CD4-positive, alpha-beta T cell (primary cell): ENCODE measurements at regions of chr15 and their contacts with region 1.

Region 1: DNA sequence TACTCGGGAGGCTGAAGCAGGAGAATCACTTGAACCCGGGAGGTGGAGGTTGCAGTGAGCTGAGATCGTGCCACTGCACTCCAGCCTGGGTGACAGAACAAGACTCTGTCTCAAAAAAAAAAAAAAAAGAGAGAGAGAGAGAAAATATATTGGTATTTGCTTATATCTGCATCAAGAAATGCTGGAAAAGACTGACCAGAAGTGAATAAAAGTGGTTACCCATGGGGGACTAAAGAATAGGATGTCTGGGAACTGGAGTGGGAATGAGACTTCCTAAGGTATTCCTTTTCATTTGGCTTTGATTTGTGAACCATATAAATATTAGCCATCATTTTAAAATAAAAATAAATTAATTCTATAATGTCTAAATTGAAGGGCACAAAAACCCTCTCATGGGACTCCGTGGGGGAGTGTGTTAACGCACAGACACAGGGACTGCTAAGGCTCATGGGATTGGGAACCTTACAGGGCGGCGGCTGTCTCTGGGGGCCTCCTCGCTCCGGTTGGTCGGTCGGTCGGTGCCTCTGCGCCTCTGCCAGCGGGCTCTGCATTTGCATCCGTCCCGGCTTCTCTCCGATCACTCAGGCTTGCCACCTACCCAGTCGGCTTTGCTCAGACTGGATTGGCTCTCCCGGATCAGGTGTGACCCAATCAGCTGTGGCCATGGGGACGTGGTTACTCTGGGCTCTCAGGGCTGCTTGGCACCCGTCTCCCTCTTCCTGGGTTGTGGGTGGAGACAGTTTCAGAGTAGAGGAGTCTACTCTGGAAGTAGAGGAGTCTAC is 12.7 kb upstream of the TSPAN3 start:
- DNase-seq: peak; percentile 24 to 85 (median 42)
- ATAC-seq: peak; percentile 96
- H3K4me3 ChIP-seq: peak overlapping the region; percentile 30
- H3K4me3 Mint-ChIP-seq: peak overlapping the region; percentile 30
- H3K27ac ChIP-seq: no peak overlapping the region
- H3K27ac Mint-ChIP-seq: no peak overlapping the region
- H3K4me1 ChIP-seq: peaks cover 15% of the 10 kb centered on the region
- H3K4me1 Mint-ChIP-seq: peaks cover 14% of the 10 kb centered on the region
- H3K27me3 ChIP-seq: no peaks in the 10 kb centered on the region
- H3K27me3 Mint-ChIP-seq: no peaks in the 10 kb centered on the region
- CTCF ChIP-seq: no peak

Region 2: DNA sequence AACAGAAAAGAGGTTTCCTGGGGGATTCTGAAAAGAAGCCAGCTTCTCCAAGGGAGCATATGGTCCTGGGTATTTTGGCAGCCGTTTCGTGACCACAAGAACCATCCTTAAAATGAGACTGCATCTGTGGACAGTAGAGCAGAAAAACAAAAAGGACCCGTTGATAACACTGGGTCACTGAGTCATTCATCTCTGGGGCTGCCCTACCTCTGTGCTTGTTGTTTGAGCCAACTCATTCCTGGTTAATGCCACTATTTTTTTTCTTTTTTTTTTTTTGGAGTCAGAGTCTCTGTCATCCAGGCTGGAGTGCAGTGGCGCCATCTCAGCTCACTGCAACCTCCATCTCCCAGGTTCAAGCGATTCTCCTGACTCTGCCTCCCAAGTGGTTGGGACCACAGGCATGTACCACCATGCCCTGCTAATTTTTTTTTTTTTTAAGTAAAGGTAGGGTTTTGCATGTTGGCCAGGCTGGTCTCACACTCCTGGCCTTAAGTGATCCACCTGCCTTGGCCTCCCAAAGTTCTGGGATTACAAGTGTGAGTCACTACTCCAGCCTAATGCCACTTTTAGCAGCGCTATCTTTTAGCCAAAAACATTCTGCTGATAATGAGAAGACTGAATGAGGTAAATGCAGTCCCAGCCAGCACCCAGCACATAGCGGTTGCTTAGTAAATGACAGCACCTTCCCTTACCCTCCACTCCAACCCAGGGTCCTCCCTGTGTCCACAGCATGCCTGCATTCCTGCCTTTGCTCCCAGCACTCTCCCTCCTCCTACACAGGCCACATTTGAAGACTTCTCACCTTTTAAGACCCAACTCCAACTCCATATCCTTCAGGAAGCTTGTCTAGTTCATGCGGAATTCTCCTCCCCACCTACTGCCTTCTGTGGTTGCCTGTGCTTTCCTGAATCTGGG is 756.1 kb before region 1 on chr15:
- CTCF ChIA-PET with region 1: no interaction called
- POLR2A ChIA-PET with region 1: no interaction called
- intact Hi-C with region 1: loop called in 1 of 2 experiments (anchors 10 kb)
- DNase-seq: no peak
- ATAC-seq: no peak
- H3K4me3 ChIP-seq: no peak overlapping the region
- H3K4me3 Mint-ChIP-seq: no peak overlapping the region
- H3K27ac ChIP-seq: no peak overlapping the region
- H3K27ac Mint-ChIP-seq: no peak overlapping the region
- H3K4me1 ChIP-seq: no peaks in the 10 kb centered on the region
- H3K4me1 Mint-ChIP-seq: no peaks in the 10 kb centered on the region
- H3K27me3 ChIP-seq: peaks cover 16 to 32% of the 10 kb centered on the region in 2 experiments
- H3K27me3 Mint-ChIP-seq: peaks cover 71% of the 10 kb centered on the region
- CTCF ChIP-seq: no peak

Region 3: GRCh38 chr15:77201665-77202064 is 118.1 kb after region 1 on chr15:
- CTCF ChIA-PET with region 1: no interaction called
- POLR2A ChIA-PET with region 1: no interaction called
- intact Hi-C with region 1: no loop called
- DNase-seq: no peak
- ATAC-seq: no peak
- H3K4me3 ChIP-seq: no peak overlapping the region
- H3K4me3 Mint-ChIP-seq: no peak overlapping the region
- H3K27ac ChIP-seq: no peak overlapping the region
- H3K27ac Mint-ChIP-seq: no peak overlapping the region
- H3K4me1 ChIP-seq: no peaks in the 10 kb centered on the region
- H3K4me1 Mint-ChIP-seq: no peaks in the 10 kb centered on the region
- H3K27me3 ChIP-seq: no peaks in the 10 kb centered on the region
- H3K27me3 Mint-ChIP-seq: no peaks in the 10 kb centered on the region
- CTCF ChIP-seq: no peak